ENCODE measurements at regions of chr5 and their contacts with region 1.

Region 1: DNA sequence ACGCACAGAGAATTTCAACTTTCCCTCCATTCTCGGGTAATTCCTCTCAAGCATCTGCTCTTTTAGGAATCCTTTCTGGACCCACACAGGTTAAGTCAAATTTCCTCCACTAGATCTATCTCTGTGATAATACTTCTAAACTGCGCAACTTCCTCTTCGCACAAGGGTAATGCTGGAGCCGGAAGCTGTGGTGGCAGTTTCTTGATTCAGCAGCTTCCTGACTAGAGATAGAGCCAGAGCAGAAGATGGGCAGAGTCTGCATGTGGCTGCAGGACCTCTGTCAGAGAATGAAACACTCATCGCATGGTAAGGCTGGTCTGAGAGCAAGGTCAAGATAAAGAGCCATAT is 11.1 kb upstream of the CDC42SE2 start:
- DNase-seq: peak; percentile 78
- H3K4me3 Mint-ChIP-seq: peak overlapping the region; percentile 89
- H3K27ac Mint-ChIP-seq: peak overlapping the region; percentile 99
- H3K4me1 Mint-ChIP-seq: peaks cover 69% of the 10 kb centered on the region
- H3K27me3 Mint-ChIP-seq: no peaks in the 10 kb centered on the region

Region 2: GRCh38 chr5:131170540-131171275 is 82.1 kb before region 1 on chr5 and contains the start of gene LYRM7:
- intact Hi-C with region 1: loop called (anchors 1 kb)
- DNase-seq: peak; percentile 96
- H3K4me3 Mint-ChIP-seq: peak within 1 kb of the TSS; percentile 99
- H3K27ac Mint-ChIP-seq: peak within 1 kb of the TSS; percentile 98
- H3K4me1 Mint-ChIP-seq: peaks cover 51% of the 10 kb centered on the region
- H3K27me3 Mint-ChIP-seq: no peaks in the 10 kb centered on the region
- total RNA-seq, gene LYRM7: 13.7 and 15.8 TPM in 2 replicates

Region 3: DNA sequence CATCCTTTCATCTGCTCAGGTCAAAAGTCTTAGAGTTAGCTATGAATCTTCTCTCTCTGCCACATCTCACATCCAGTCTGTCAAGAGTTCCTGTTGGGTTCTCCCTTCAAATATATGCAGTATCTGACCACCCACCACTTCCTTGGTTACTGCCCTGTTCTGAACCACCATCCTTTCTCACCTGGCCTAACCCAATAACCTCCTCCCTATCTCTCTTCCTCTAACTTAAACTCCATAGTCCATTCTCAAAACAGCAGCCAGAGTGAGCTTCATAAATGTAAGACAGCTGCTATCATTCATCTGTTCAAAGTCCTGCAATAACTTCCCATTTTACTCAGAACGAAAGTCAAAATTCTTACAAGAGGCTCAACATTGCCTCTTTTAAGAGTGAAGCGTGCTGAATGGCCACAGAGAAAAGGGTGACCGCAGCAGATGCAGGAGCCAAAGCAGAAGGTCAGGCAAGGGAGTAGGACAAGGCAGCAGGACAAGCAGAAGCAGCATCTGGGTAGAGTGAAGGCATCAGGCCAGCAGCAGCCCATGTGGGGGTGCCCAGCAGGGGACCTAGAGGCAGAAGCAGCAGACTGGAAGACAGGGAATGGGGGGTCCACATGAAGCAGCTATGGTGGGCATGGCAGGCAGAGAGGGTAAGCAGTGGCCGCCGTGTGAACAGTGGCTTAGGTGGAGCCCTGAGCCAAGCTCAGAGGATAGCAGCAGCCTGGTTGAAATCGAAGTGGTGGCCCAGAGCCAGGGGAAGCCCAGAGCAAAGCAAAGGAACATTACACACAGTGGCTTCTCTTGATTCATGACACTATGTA is 28.2 kb before region 1 on chr5:
- intact Hi-C with region 1: loop called (anchors 2 kb)
- DNase-seq: no peak
- H3K4me3 Mint-ChIP-seq: no peak overlapping the region
- H3K27ac Mint-ChIP-seq: no peak overlapping the region
- H3K4me1 Mint-ChIP-seq: peaks cover 13% of the 10 kb centered on the region
- H3K27me3 Mint-ChIP-seq: no peaks in the 10 kb centered on the region

Region 4: GRCh38 chr5:131242728-131243255 is 10.0 kb before region 1 on chr5:
- intact Hi-C with region 1: loop called (anchors 1 kb)
- DNase-seq: no peak
- H3K4me3 Mint-ChIP-seq: no peak overlapping the region
- H3K27ac Mint-ChIP-seq: no peak overlapping the region
- H3K4me1 Mint-ChIP-seq: peaks cover 9% of the 10 kb centered on the region
- H3K27me3 Mint-ChIP-seq: no peaks in the 10 kb centered on the region

Region 5: DNA sequence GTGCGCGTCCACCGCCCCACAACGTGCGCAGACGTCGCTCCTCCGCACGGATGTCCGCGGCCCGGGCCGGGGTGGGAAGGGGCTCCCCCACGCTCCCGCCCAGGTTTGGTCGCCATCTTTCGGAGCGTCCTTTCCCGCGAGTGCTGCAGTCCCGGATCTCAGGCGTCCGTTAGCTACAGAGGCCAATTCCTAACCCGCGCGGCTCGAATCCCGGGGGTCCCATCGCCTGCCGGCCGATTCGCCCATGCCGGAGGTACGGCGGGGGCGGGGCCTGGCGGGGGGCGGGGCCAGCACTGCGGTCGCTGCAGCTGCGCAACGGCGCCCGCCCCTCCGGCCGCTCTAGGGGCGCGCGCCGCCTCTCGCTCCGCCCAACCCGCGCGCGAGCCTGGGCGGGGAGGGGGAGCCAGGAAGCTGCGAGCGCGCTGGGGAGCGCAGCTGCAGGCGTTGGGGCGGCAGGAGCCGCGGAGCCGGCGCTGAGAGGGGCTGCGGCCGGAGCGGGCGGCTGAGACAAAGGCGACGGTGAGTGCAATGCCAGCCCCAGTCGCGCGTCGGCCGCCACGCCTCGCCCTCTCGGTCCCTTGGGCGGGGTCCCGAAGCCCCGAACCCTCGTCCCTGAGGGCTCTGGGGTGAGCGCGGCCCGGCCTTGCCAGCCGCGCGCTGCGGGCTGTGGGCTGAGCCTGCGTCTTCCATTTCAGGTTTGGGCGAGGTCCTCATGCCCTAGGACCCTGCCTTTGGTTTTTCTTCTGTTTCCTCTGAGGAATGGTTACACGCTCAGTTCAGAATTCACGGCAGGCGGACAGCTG is 11.1 kb after region 1 on chr5 and contains the start of gene CDC42SE2:
- intact Hi-C with region 1: loop called (anchors 1 kb)
- DNase-seq: peak; percentile 84
- H3K4me3 Mint-ChIP-seq: peak within 1 kb of the TSS; percentile 84
- H3K27ac Mint-ChIP-seq: peak within 1 kb of the TSS; percentile 92
- H3K4me1 Mint-ChIP-seq: peaks cover 48% of the 10 kb centered on the region
- H3K27me3 Mint-ChIP-seq: no peaks in the 10 kb centered on the region
- total RNA-seq, gene CDC42SE2: 100.0 and 103 TPM in 2 replicates

Region 6: GRCh38 chr5:131281133-131281867 is 28.5 kb after region 1 on chr5:
- intact Hi-C with region 1: loop called (anchors 1 kb)
- DNase-seq: no peak
- H3K4me3 Mint-ChIP-seq: peak overlapping the region; percentile 86
- H3K27ac Mint-ChIP-seq: peak overlapping the region; percentile 91
- H3K4me1 Mint-ChIP-seq: peaks cover 78% of the 10 kb centered on the region
- H3K27me3 Mint-ChIP-seq: peaks cover 5% of the 10 kb centered on the region

Region 7: DNA sequence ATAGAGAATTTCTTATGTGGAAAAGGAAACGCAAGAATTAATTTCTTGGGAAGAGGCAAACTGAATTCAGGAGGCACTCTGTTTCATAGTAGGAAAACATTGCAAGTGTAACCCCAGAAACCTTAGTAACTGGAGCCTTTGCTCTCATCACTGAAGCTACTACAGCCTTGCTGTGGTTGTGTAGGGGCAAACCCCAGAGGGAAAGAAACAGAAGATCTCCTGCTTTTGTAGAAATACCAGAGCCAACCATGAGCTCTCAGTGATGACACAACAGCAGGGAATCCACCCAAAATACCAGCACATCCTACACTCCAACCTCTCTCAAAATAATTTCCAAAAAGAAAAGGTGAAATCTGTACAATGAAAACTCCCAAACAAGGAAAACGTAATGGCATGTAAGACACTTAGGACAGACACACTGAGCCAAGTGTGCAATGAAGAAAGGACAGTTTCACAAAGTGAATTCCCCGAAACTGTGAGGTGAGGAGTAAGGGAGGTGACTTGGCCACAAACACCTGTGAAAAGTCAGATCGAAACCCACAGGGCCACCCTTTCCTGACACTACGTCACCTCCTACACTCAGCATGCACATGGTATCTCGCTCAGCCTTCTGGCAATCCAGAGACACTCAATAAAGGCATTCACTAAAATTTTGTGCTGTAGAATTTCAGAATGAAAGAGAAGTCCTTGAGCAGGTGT is 767.2 kb after region 1 on chr5:
- intact Hi-C with region 1: loop called (anchors 5 kb)
- DNase-seq: peak; percentile 85
- H3K4me3 Mint-ChIP-seq: peak overlapping the region; percentile 50
- H3K27ac Mint-ChIP-seq: peak overlapping the region; percentile 92
- H3K4me1 Mint-ChIP-seq: peaks cover 51% of the 10 kb centered on the region
- H3K27me3 Mint-ChIP-seq: peaks cover 48% of the 10 kb centered on the region